HEK293 (cell line): ENCODE measurements at regions of chr13 and their contacts with region 1.

Region 1: GRCh38 chr13:80342471-80343380 is 1.8 kb upstream of the SPRY2 start:
- H3K4me3 ChIP-seq: peak overlapping the region; percentile 43
- H3K27ac ChIP-seq: peak overlapping the region; percentile 26; the same call in 1 of the 2 replicates
- H3K4me1 ChIP-seq: no peaks in the 10 kb centered on the region
- CTCF ChIP-seq: peak; percentile 92

Region 2: GRCh38 chr13:80132741-80133601 is 209.8 kb before region 1 on chr13:
- CTCF ChIA-PET with region 1: interaction called, 3 read pairs
- POLR2A ChIA-PET with region 1: interaction called, 15 read pairs
- H3K4me3 ChIP-seq: peak overlapping the region; percentile 24
- H3K27ac ChIP-seq: peak overlapping the region; percentile 58
- H3K4me1 ChIP-seq: no peaks in the 10 kb centered on the region
- CTCF ChIP-seq: no peak

Region 3: DNA sequence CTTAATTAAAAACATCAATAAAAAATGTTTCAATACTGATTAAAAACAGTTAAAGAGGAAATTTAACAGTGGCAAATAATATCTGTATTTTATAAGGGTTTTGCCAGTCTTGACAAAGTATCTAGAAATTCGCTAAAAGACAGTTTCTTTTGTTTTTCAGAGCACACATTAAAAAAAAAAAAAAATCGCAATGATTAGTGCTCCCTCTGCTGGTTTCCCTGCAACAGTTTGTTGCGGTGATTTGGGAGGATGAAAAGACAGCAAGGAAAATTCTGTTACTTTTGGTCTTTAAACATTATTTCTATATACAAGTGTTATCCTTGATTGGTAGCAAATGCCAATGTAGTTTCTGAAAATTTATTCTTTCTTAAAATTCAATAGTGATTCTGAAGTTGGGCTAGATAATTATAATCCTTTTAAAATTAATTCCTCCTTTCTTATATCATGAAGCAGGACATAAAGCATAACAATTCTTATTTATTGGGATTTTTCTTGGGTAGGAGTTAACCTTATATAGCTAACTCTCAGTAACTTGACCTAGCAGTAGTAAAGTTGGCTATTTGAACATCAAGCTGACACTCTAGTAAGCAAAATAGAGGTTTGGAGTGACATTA is 21.3 kb after region 1 on chr13:
- CTCF ChIA-PET with region 1: interaction called, 17 read pairs
- POLR2A ChIA-PET with region 1: interaction called, 6 read pairs
- H3K4me3 ChIP-seq: no peak overlapping the region
- H3K27ac ChIP-seq: no peak overlapping the region
- H3K4me1 ChIP-seq: no peaks in the 10 kb centered on the region
- CTCF ChIP-seq: no peak

Region 4: DNA sequence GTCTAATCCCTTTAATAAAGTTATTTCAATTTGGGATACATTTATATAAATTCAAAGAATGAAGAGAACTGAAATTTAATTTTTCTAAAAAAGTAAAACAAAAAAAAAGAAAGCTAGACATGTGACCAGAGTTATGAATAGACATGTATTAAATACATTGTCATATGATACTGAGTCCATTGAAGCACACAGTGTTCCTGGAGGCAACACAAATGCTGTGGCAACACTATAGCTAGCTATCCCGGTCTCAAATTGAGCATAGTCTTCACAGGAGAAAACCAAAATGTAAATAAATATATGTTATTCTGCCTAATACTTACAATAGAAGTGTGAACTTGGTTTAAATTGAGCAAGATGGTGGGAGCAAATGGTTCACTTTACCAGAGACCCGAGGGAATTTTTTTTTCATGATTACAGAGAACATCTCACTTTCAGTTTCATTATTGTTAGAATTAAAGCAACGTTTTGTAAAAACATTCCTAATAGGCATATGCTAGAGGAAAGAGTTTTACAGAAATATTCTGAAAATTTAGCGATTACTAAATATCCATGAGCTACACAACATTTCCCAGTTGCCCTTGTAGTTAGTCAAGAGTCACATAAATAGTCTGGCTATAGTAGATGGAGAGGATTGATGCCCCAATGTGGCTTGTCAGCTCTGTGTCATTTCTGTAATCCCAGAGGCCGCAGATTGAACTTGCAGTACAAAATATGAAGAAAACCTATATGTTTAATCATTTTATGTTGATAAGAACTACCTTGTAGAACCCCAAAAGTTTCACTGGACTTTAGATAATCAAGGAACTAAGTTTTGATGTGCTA is 773.9 kb after region 1 on chr13:
- CTCF ChIA-PET with region 1: no interaction called
- POLR2A ChIA-PET with region 1: no interaction called
- H3K4me3 ChIP-seq: no peak overlapping the region
- H3K27ac ChIP-seq: no peak overlapping the region
- H3K4me1 ChIP-seq: no peaks in the 10 kb centered on the region
- CTCF ChIP-seq: no peak